Endothelial cell of umbilical vein (primary cell): ENCODE measurements at regions of chr9 and their contacts with region 1.

Region 1: DNA sequence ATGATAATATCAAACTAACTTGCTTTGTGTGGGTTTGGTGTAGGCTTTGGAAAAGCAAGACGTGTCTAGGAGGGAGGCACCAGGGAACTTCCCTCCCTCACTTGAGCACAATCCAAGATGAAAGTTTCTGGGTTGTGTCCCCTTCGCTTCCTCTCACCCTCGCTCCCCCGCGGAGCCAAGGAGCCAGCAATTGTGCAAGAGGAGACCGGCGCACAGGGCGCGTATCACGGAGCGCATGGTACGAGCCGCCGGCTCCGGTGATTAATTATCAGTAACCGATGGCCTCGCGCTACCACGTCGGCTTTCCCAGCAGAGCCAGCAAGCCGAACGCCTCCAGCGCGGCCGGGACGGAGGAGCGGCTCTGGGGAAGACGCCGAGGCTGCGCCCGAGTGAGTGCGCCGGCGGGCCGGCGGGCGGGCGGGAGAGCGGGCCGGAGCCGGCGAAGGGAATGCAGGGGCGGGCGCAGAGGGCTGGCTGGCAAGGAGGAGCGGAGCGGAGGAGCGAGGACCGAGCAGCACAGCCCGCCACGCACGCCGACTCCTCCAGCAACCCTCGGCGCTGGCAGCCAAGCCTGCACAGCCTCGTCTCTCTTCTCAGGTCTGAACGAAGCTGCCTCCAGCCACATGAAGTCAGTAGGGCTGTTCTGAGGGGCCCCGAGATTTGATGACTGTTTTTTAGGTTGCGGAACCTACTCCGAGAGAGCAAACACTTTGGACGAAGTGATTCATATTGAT is 143.6 kb downstream of the BNC2 start:
- DNase-seq: peak; percentile 84
- H3K4me3 ChIP-seq: peak overlapping the region; percentile 66 to 94 (median 84)
- H3K27ac ChIP-seq: peak overlapping the region; percentile 93
- H3K4me1 ChIP-seq: peaks cover 26% of the 10 kb centered on the region
- H3K27me3 ChIP-seq: no peaks in the 10 kb centered on the region
- CTCF ChIP-seq: no peak
- POLR2A ChIP-seq: peak; percentile 62

Region 2: GRCh38 chr9:15873569-15874177 is 853.2 kb before region 1 on chr9:
- CTCF ChIA-PET with region 1: no interaction called
- POLR2A ChIA-PET with region 1: no interaction called
- dilution Hi-C with region 1: no loop called
- intact Hi-C with region 1: loop called (anchors 2 kb)
- DNase-seq: peak; percentile 55
- H3K4me3 ChIP-seq: no peak overlapping the region
- H3K27ac ChIP-seq: no peak overlapping the region
- H3K4me1 ChIP-seq: no peaks in the 10 kb centered on the region
- H3K27me3 ChIP-seq: no peaks in the 10 kb centered on the region
- CTCF ChIP-seq: peak; percentile 25 to 33
- POLR2A ChIP-seq: no peak

Region 3: GRCh38 chr9:16236311-16236710 is 490.6 kb before region 1 on chr9:
- CTCF ChIA-PET with region 1: no interaction called
- POLR2A ChIA-PET with region 1: no interaction called
- dilution Hi-C with region 1: no loop called
- intact Hi-C with region 1: no loop called
- DNase-seq: no peak
- H3K4me3 ChIP-seq: no peak overlapping the region
- H3K27ac ChIP-seq: no peak overlapping the region
- H3K4me1 ChIP-seq: no peaks in the 10 kb centered on the region
- H3K27me3 ChIP-seq: no peaks in the 10 kb centered on the region
- CTCF ChIP-seq: no peak
- POLR2A ChIP-seq: no peak

Region 4: GRCh38 chr9:16266648-16267276 is 460.1 kb before region 1 on chr9:
- CTCF ChIA-PET with region 1: interaction called, 5 read pairs
- POLR2A ChIA-PET with region 1: no interaction called
- dilution Hi-C with region 1: no loop called
- intact Hi-C with region 1: loop called (anchors 10 kb)
- DNase-seq: no peak
- H3K4me3 ChIP-seq: peak overlapping the region in 1 of 3 experiments; percentile 32
- H3K27ac ChIP-seq: no peak overlapping the region
- H3K4me1 ChIP-seq: no peaks in the 10 kb centered on the region
- H3K27me3 ChIP-seq: no peaks in the 10 kb centered on the region
- CTCF ChIP-seq: peak; percentile 33 to 56
- POLR2A ChIP-seq: no peak

Region 5: DNA sequence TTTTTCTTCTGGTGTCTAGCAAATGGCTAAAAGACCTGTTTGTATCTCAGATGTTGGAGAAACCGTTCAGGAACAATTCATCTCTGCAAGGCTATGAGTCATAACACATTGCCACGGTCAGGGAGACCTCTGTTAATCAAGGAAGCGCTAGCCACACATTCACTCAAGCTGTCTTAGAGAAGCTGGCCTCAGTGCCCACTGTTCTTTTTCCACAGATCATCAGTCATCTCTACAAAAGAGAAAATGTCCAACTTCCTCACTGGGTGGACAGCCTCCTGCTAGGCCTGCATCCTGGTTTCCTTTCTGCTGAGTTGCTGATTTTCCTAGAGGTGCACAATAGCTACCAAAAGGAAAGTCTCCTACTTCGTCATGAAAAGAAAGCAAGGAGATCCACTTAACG is 216.9 kb before region 1 on chr9:
- CTCF ChIA-PET with region 1: interaction called, 3 read pairs
- POLR2A ChIA-PET with region 1: no interaction called
- dilution Hi-C with region 1: no loop called
- intact Hi-C with region 1: loop called (anchors 1 kb)
- DNase-seq: peak; percentile 86
- H3K4me3 ChIP-seq: peak overlapping the region in 2 of 3 experiments; percentile 12 to 57
- H3K27ac ChIP-seq: peak overlapping the region; percentile 85
- H3K4me1 ChIP-seq: peaks cover 33% of the 10 kb centered on the region
- H3K27me3 ChIP-seq: no peaks in the 10 kb centered on the region
- CTCF ChIP-seq: no peak
- POLR2A ChIP-seq: no peak

Region 6: GRCh38 chr9:16626577-16627131 is 100.2 kb before region 1 on chr9:
- CTCF ChIA-PET with region 1: interaction called, 3 read pairs
- POLR2A ChIA-PET with region 1: no interaction called
- dilution Hi-C with region 1: no loop called
- intact Hi-C with region 1: loop called (anchors 1 kb)
- DNase-seq: peak; percentile 86
- H3K4me3 ChIP-seq: peak overlapping the region in 1 of 3 experiments; percentile 20
- H3K27ac ChIP-seq: peak overlapping the region; percentile 87
- H3K4me1 ChIP-seq: peaks cover 50% of the 10 kb centered on the region
- H3K27me3 ChIP-seq: no peaks in the 10 kb centered on the region
- CTCF ChIP-seq: no peak
- POLR2A ChIP-seq: no peak

Region 7: DNA sequence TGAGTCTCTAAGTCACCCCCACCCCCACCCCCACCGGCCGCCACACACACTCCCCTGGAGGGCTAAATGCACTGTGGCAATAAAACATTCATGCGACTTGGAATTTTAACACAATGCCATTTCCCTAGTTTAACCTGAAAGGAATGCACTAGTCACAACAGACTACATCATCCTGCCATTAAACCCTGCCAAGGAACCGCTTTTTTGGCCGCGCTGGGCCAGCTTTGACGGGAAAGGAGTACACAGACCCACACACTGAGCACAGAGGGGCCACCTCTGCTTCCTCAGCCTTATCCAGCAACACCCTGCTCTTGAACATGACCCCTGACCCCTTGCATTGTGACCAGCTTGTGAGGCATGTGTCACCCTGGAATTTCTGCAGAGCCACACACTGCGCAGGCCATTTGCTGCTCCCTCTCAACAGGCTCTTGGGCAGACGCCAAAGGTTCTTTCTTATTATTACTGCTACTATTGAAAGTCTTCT is 21.7 kb before region 1 on chr9:
- CTCF ChIA-PET with region 1: interaction called, 19 read pairs
- POLR2A ChIA-PET with region 1: interaction called, 14 read pairs
- dilution Hi-C with region 1: no loop called
- intact Hi-C with region 1: loop called (anchors 1 kb)
- DNase-seq: peak; percentile 99
- H3K4me3 ChIP-seq: peak overlapping the region in 2 of 3 experiments; percentile 57 to 97
- H3K27ac ChIP-seq: peak overlapping the region; percentile 99
- H3K4me1 ChIP-seq: peaks cover 51% of the 10 kb centered on the region
- H3K27me3 ChIP-seq: no peaks in the 10 kb centered on the region
- CTCF ChIP-seq: no peak
- POLR2A ChIP-seq: peak; percentile 44